Activated CD4-positive, alpha-beta memory T cell treated with anti-CD3 and anti-CD28 coated beads for 36 hours (primary cell): ENCODE measurements at regions of chr14 and their contacts with region 1.

Region 1: GRCh38 chr14:90970167-90970600 is 90.3 kb downstream of the RPS6KA5 start:
- DNase-seq: no peak
- H3K4me3 Mint-ChIP-seq: peak overlapping the region; percentile 48
- H3K27ac Mint-ChIP-seq: peak overlapping the region; percentile 88
- H3K4me1 Mint-ChIP-seq: peaks cover 50% of the 10 kb centered on the region
- H3K27me3 Mint-ChIP-seq: no peaks in the 10 kb centered on the region

Region 2: DNA sequence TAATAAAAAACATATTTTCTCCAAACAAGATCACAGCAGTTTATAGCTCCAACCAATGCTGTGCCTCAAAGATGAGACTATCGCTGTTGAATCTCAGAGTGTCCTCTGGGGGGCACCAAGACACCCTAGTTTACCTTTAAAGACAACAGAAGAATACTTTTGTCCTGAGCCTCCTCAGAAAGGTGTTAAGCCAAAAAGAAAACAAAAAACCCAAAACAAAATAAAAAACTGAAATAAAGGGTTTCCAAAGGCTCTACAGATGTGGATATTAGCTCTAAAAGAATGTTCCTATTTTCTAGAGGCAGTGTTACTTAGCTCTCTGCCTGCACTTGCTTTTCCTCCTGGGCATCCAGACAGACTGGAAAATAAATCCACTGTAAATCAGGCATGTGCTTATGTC is 67.1 kb before region 1 on chr14:
- CTCF ChIA-PET with region 1: interaction called, 5 read pairs
- POLR2A ChIA-PET with region 1: interaction called, 4 read pairs
- intact Hi-C with region 1: loop called (anchors 1 kb)
- DNase-seq: peak; percentile 63
- H3K4me3 Mint-ChIP-seq: no peak overlapping the region
- H3K27ac Mint-ChIP-seq: no peak overlapping the region
- H3K4me1 Mint-ChIP-seq: peaks cover 26% of the 10 kb centered on the region
- H3K27me3 Mint-ChIP-seq: no peaks in the 10 kb centered on the region

Region 3: DNA sequence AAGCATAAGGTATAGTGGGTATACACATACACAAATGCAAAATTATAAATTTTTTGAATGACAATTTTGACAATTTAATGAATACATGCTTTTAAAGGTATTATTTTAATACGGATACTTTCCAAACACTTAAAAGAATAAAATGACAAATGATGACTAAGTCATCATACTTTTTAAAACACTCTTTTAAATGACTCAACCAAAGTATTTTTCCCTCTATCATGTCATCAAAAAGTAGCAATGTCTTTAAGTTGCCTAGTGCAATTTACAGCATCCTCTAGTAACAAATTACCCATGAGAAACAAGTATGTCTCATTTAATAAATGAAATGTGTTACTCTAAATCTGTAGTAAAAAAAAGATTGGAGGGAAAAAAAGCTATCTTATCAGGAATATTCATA is 17.0 kb after region 1 on chr14:
- CTCF ChIA-PET with region 1: no interaction called
- POLR2A ChIA-PET with region 1: interaction called, 12 read pairs
- intact Hi-C with region 1: loop called (anchors 1 kb)
- DNase-seq: no peak
- H3K4me3 Mint-ChIP-seq: no peak overlapping the region
- H3K27ac Mint-ChIP-seq: peak overlapping the region; percentile 61
- H3K4me1 Mint-ChIP-seq: peaks cover 47% of the 10 kb centered on the region
- H3K27me3 Mint-ChIP-seq: no peaks in the 10 kb centered on the region

Region 4: DNA sequence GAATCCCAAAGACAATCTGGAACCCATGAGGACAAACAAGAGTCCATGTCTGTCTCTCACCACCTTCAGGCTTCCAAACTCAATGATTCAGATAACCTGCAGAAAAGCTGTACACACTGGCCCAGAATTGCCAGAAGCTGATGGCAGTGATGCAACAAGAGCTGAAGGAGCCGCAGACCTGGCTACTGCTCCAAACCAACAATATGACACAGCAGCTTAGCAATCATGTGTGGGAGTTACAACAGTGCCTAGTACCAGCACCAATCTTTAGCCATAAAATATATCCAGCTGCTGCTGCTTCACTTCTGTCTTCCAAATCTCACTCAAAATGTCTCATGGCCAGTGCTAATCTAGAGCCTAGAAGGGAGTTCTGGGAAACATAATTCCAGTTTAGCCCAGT is 68.3 kb after region 1 on chr14:
- CTCF ChIA-PET with region 1: interaction called, 9 read pairs
- POLR2A ChIA-PET with region 1: interaction called, 10 read pairs
- intact Hi-C with region 1: loop called (anchors 1 kb)
- DNase-seq: peak; percentile 45
- H3K4me3 Mint-ChIP-seq: no peak overlapping the region
- H3K27ac Mint-ChIP-seq: peak overlapping the region; percentile 42
- H3K4me1 Mint-ChIP-seq: peaks cover 75% of the 10 kb centered on the region
- H3K27me3 Mint-ChIP-seq: no peaks in the 10 kb centered on the region

Region 5: GRCh38 chr14:91228112-91229004 is 258.2 kb after region 1 on chr14:
- CTCF ChIA-PET with region 1: no interaction called
- POLR2A ChIA-PET with region 1: no interaction called
- intact Hi-C with region 1: loop called (anchors 1 kb)
- DNase-seq: peak; percentile 95
- H3K4me3 Mint-ChIP-seq: peak overlapping the region; percentile 59
- H3K27ac Mint-ChIP-seq: peak overlapping the region; percentile 94
- H3K4me1 Mint-ChIP-seq: peaks cover 94% of the 10 kb centered on the region
- H3K27me3 Mint-ChIP-seq: no peaks in the 10 kb centered on the region

Region 6: DNA sequence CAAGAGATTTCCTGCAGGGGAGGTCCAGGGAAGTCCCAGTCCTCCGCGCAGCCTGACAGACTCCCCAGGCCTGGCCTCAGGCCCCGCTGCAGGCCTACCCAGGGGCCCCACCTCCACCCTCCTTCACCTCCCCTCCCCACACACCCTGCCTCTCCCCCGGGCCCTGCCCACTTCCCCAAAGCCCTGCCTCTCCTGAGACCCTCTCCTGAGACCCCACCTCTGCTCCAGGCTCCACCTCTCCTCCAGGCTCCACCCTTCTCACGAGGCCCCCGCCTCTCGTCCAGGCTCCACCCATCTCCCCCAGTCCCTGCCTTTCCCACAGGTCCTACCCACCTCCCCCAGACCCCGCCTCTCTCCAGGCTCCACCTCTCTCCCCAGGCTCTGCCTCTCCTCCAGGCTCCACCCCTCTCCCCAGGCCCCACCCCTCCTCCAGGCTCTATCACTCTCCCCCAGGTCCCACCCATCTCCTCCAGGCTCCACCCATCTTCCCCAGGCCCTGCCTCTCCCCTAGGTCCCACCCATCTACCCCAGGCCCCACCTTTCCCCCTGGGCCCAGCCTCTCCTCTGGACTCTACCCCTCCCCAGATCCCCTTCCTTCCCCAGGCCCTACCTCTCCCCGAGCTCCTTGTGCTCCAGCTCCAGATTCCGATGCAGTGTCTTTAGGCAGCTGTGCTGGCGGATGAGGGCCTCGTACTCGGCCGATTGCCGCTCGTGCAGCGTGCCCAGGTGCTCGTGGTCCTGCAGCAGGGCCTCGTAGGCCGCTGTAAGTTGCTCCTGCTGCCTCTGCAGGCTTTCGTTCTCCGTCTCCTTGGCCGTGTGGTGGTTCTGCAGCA is 333.1 kb after region 1 on chr14:
- CTCF ChIA-PET with region 1: no interaction called
- POLR2A ChIA-PET with region 1: no interaction called
- intact Hi-C with region 1: loop called (anchors 1 kb)
- DNase-seq: peak; percentile 94
- H3K4me3 Mint-ChIP-seq: peak overlapping the region; percentile 54
- H3K27ac Mint-ChIP-seq: peak overlapping the region; percentile 95
- H3K4me1 Mint-ChIP-seq: peaks cover 56% of the 10 kb centered on the region
- H3K27me3 Mint-ChIP-seq: no peaks in the 10 kb centered on the region